Activated CD4-positive, alpha-beta T cell treated with anti-CD3 and anti-CD28 coated beads, Interleukin-2, amount 10 ng/mL, durations not matched to agents 24 days and 14 days (primary cell): ENCODE measurements at regions of chr17 and their contacts with region 1.

Region 1: DNA sequence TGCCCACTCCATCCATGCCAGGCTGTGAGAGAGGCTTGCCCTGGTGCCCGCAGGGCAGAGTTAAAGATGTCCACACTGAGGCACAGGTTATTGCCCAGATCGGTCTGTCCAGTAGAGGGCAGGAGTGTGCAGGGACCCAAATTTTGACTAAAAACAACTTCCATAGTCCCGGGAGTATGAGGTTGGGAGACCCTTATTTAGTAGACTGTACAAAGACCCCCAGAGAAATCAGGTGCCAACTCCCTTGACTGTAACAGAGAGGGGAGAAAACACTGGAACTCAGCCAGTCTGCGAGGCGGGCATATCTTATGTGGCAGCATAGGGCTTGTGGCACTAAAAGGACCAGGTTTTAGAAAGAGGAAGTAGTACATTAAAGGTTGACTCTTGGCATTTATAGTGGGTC is 43.4 kb downstream of the HNF1B start:
- DNase-seq: peak; percentile 87
- H3K4me3 Mint-ChIP-seq: peak overlapping the region; percentile 32
- H3K27ac Mint-ChIP-seq: peak overlapping the region; percentile 18
- H3K4me1 Mint-ChIP-seq: peaks cover 33% of the 10 kb centered on the region
- H3K27me3 Mint-ChIP-seq: peaks cover 27% of the 10 kb centered on the region

Region 2: DNA sequence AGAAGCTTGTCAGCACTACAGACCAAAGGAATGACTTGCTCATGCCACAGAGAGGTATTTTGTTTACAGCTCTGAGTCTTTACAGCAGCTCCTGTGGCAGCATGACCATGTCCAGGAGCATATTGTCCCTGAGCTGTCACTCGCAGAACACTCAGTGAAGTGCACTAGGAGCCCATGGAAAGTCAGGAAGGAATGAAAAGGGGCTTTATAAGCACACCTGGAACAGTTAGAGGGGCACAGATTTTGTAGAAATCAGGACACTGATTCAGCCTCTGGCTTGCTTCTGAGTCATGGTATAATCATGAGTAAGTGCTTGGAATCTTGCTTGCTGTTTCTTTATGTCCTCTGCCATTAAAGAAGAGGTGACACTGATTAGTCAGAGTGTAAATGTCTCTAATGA is 253.9 kb before region 1 on chr17:
- intact Hi-C with region 1: no loop called
- DNase-seq: no peak
- H3K4me3 Mint-ChIP-seq: no peak overlapping the region
- H3K27ac Mint-ChIP-seq: no peak overlapping the region
- H3K4me1 Mint-ChIP-seq: peaks cover 3% of the 10 kb centered on the region
- H3K27me3 Mint-ChIP-seq: no peaks in the 10 kb centered on the region

Region 3: DNA sequence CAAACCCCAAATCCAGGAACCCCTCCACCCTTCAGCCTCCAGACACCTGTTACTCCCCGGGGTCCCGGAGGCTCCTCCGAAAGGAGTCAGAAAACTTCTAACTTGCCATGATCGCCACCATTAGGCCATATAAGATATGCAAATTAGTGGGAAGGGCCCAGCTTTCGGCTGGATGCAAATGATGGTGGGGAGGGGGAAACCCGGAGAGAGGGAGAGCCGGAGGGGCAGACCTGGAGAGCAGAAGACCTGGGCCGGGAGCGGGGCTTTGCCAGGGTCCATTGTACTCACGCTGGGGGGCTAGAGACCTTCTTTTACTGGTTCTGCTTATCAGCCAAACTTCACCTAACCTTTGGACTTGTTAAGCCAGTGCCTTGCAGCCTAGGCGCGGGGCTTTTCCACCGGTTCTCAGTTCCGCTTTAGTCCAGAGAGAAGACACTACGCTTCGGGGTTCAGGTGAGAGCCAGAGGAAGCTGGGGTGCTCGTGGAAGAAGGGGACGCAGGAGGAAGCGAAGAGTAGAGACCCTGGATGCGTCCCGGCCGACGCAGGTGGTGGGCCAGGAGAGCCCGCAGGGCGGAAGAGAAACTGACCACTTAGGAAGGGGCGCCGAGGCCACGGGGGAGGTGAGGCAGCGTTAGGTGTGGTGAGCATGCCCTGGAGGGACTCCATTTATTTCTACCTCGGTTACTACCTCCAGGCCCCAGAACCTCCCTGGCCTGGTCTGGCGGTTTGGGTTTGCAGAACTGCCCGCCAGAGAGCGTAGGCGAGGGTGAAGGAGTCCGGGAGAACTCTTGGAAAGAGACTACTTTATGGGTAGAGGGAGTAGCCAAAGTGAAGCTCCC is 43.7 kb after region 1 on chr17 and contains the start of gene HNF1B:
- intact Hi-C with region 1: loop called (anchors 5 kb)
- DNase-seq: peak; percentile 71
- H3K4me3 Mint-ChIP-seq: peak within 1 kb of the TSS; percentile 81
- H3K27ac Mint-ChIP-seq: peak within 1 kb of the TSS; percentile 53
- H3K4me1 Mint-ChIP-seq: peaks cover 13% of the 10 kb centered on the region
- H3K27me3 Mint-ChIP-seq: peaks cover 70% of the 10 kb centered on the region
- total RNA-seq, gene HNF1B: 2.2 and 2.9 TPM in 2 replicates

Region 4: GRCh38 chr17:37761059-37761458 is 59.6 kb after region 1 on chr17:
- intact Hi-C with region 1: loop called (anchors 2 kb)
- DNase-seq: no peak
- H3K4me3 Mint-ChIP-seq: peak overlapping the region; percentile 27
- H3K27ac Mint-ChIP-seq: peak overlapping the region; percentile 61
- H3K4me1 Mint-ChIP-seq: peaks cover 46% of the 10 kb centered on the region
- H3K27me3 Mint-ChIP-seq: peaks cover 22% of the 10 kb centered on the region

Region 5: DNA sequence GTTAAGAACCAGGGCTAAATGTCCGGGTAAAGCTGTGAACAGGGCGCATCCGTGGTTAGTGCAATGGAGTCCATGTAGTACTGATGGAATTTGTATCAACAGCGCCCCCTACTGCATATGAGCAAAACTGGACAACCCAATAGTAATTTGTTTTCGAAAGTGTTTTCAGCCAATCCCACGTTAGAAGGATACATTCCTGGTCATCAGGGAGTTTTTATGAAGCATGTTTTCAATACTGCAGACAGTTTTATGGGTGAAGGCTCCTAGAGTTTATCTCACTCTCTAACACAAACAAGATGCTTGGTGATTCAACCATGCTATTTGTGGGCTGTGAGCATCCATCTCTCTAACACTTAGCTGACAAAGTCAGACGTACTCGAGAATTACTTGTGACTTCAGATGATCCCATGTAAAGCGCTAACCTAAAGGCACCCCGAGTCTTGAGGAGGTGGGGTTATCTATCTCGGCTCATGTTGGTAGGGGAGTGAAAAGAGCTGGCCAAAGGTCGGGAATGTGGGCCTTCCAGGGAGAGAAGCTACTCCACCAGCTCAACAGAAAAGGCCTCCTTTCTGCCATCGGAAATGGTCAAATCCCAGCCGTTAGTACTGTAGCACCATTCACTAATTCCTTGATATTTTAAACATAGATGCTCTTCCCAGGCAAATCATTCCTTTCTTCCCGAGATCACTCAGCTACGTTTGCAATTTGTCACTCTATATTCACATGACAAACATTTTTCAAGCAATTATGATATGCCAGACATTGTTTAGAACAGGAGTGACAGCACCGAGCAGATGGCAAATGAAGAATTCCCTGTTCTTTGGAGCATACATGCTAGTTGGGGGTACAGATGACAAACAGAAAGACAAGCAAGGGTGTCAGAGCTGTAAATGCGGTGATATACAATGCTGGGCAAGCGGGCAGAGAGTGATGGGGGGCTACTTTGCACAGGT is 90.2 kb after region 1 on chr17:
- intact Hi-C with region 1: loop called (anchors 1 kb)
- DNase-seq: peak; percentile 87
- H3K4me3 Mint-ChIP-seq: no peak overlapping the region
- H3K27ac Mint-ChIP-seq: no peak overlapping the region
- H3K4me1 Mint-ChIP-seq: peaks cover 6% of the 10 kb centered on the region
- H3K27me3 Mint-ChIP-seq: peaks cover 35% of the 10 kb centered on the region

Region 6: GRCh38 chr17:37818689-37819088 is 117.2 kb after region 1 on chr17:
- intact Hi-C with region 1: loop called (anchors 1 kb)
- DNase-seq: no peak
- H3K4me3 Mint-ChIP-seq: no peak overlapping the region
- H3K27ac Mint-ChIP-seq: no peak overlapping the region
- H3K4me1 Mint-ChIP-seq: peaks cover 16% of the 10 kb centered on the region
- H3K27me3 Mint-ChIP-seq: peaks cover 20% of the 10 kb centered on the region